ENCODE measurements at regions of chr9 and their contacts with region 1.

Region 1: DNA sequence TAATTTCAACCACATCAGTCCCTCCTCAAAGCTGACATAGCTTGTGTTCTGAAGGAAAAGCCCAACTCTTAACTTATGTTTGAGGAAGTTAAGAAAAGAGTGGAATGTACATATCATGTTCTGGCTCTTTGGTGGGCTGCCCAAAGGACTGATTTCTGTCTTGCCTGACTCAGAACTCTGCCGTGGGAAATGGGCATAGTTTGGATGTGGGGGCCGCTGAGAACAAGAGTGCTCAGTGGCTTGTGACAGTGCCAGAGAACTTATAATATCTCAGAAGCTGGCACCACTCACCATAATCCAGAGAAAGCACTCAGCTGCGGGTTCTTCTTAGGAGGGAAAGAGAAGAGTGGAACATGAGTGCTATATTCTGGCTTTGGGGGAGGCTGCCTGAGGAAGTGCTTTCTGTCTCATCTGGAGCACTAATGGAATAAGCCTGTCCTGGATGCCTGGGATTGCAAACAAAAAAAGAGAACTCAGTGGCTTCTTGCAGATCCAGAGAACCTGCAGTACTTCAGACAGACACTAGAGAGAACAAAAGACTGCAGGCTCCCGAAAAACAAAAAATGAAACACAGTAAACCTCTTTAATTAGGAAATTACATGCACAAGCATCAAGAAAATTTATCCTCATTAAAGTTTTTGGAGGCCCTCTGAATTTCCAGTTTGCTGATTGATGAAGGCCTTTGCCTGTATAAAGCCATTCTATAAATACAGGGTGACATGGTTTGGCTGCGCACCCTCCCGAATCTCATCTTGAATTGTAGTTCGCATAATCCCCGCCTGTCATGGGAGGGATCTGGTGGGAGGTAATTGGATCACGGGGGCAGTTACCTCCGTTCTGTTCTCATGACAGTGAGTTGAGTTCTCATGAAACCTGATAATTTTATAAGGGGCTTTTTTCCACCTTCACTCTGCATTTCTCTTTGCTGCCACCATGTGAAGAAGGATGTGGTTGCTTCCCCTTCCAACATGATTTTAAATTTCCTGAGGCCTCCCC is 207.0 kb downstream of the DMAC1 start:
- DNase-seq: no peak
- ATAC-seq: no peak

Region 2: GRCh38 chr9:7688626-7689025 is 96.0 kb after region 1 on chr9:
- intact Hi-C with region 1: loop called (anchors 10 kb)
- DNase-seq: no peak
- ATAC-seq: no peak

Measured in Right ventricle myocardium inferior (tissue), 1 donor.